ENCODE measurements at regions of chr1 and their contacts with region 1.

Region 1: DNA sequence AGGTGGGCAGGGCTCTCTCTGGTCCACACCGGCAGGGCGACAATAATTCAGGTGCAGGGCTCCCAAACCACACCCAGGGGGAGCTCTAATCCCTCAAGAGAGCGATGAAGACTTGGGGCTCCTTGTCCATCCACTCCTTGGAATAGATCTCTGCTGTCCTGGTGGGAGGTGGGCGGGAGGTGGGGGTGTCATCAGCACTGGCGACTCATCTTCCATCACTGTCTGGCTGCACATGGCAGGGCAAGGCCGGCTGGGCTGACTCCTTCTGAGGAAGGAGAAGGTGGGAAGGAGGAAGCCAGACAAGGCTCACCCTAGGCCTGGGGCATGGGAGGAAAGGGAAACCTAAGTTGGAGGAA is 29.3 kb downstream of the TNNT2 start:
- DNase-seq: peak; percentile 69 to 81 (median 73)
- ATAC-seq: peak; percentile 96
- H3K4me3 ChIP-seq: no peak overlapping the region
- H3K27ac ChIP-seq: no peak overlapping the region
- H3K4me1 ChIP-seq: no peaks in the 10 kb centered on the region
- H3K27me3 ChIP-seq: peaks cover 0 to 44% of the 10 kb centered on the region in 2 experiments; a peak in 2 of 5 replicates
- CTCF ChIP-seq: peak; percentile 81 to 87 (median 83)
- EP300 ChIP-seq: no peak
- POLR2A ChIP-seq: no peak
- RAD21 ChIP-seq: peak in 1 of 2 experiments; percentile 65; a peak in 3 of 4 replicates

Region 2: DNA sequence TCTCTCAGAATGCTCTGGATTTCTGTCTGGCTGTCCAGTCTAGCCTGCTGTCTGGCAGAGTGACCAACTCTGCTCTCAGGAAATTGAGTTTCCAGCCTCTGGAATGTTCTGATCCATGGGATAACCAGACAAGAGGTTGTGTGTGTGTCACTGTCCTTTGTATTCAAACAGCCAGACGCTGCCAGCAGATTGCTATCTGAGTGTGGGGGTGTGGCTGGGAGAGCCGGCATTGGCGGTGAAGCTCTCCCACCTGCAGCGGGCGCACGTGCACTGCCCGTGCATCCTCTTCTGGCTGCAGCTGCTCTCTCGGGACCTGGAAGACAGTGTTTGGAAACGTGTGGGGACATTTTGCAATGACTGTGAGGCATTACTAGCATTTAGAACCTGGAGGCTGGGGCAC is 38.8 kb before region 1 on chr1:
- CTCF ChIA-PET with region 1: interaction called, 3 read pairs
- POLR2A ChIA-PET with region 1: interaction called, 4 read pairs
- in situ Hi-C with region 1: no loop called
- intact Hi-C with region 1: loop called (anchors 1 kb)
- DNase-seq: peak; percentile 69 to 87 (median 80)
- ATAC-seq: peak; percentile 93
- H3K4me3 ChIP-seq: no peak overlapping the region
- H3K27ac ChIP-seq: no peak overlapping the region
- H3K4me1 ChIP-seq: peaks cover 0 to 6% of the 10 kb centered on the region in 2 experiments; a peak in 2 of 5 replicates
- H3K27me3 ChIP-seq: peaks cover 25 to 92% of the 10 kb centered on the region in 2 experiments; a peak in 4 of 5 replicates
- CTCF ChIP-seq: peak; percentile 65 to 79 (median 66)
- EP300 ChIP-seq: no peak
- POLR2A ChIP-seq: no peak
- RAD21 ChIP-seq: peak in 1 of 2 experiments; percentile 60; a peak in 2 of 4 replicates

Region 3: DNA sequence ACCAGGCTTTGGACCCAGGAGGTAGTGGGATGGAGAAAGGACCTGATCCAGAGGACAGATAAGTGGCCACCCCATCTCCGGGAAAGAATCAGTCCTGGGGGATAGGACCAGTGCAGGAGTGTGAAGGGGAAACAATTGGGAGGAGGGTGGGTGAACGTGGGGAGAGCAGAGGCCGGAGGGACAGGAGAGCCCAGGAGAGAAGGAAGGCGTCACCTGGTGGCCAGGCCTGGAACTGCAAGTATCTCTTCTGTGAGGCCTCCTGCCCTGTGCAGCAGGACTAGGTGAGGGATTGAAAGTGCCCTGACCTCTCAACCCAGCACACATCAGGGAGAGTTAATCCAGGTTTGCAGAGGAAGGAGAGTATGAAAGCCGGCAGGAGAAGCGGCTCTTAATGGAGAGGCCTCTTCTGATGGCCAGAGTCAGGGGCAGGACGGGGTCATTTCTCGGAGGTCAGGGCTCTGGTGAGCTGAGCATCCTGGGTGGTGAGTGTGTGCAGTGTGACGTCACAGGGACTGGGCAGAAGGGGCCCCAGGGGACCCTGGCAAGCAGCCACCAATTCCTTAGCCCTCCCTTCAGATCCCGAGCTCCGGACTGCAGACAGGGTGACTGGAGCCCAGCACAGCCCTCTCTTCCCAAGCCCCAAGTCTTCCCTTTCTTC is 60.1 kb after region 1 on chr1:
- CTCF ChIA-PET with region 1: interaction called, 4 read pairs
- POLR2A ChIA-PET with region 1: no interaction called
- in situ Hi-C with region 1: no loop called
- intact Hi-C with region 1: loop called (anchors 1 kb)
- DNase-seq: peak; percentile 86 to 92 (median 88)
- ATAC-seq: peak; percentile 97
- H3K4me3 ChIP-seq: no peak overlapping the region
- H3K27ac ChIP-seq: no peak overlapping the region
- H3K4me1 ChIP-seq: no peaks in the 10 kb centered on the region
- H3K27me3 ChIP-seq: peaks cover 33 to 69% of the 10 kb centered on the region in 2 experiments
- CTCF ChIP-seq: peak; percentile 88 to 98 (median 97)
- EP300 ChIP-seq: no peak
- POLR2A ChIP-seq: no peak
- RAD21 ChIP-seq: peak in 1 of 2 experiments; percentile 76; a peak in 2 of 4 replicates

Region 4: DNA sequence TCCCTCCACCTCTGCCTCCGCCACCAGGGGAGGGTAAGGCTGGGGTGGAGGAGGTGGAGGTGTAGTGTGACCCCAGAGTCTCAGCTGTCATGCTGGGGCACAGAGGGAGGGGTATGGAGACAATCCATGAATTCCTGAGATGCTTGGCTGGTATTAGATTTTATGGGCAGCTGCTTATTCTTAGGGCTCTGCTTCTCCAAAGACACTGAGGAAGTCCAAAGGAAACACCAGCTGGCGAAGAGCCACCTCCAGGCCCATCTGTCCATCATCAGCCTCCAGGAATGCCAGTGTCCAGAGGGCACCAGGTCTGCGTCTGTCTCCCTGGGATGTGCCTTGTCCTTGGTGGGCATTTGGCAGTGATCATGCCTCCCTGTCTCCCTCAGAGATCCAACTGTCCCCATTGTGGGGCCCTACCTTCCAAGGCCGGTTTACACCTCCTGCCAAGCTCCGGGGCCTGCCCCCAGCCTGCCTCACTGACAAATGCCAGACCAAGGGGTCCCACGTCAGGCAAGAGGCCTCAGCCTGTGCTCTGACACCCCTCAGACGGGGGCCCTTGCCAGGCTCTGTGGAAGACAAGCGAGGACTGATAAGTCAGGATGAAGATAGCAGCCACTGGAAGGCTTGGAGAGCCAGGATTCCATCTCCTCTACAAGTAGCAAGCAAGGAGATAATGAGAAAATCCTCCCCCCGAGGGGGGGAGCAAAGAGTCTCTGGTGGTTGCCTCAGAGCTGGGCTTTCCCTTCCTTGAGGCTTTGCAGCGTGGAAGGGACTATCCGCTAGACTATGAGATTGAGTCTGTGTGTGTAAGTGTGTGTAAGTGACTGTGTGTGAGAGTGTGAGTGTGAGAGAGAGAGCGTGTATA is 71.8 kb after region 1 on chr1:
- CTCF ChIA-PET with region 1: no interaction called
- POLR2A ChIA-PET with region 1: no interaction called
- in situ Hi-C with region 1: no loop called
- intact Hi-C with region 1: no loop called
- DNase-seq: no peak
- ATAC-seq: no peak
- H3K4me3 ChIP-seq: no peak overlapping the region
- H3K27ac ChIP-seq: no peak overlapping the region
- H3K4me1 ChIP-seq: no peaks in the 10 kb centered on the region
- H3K27me3 ChIP-seq: peaks cover 42 to 54% of the 10 kb centered on the region in 2 experiments; a peak in 4 of 5 replicates
- CTCF ChIP-seq: no peak
- EP300 ChIP-seq: no peak
- POLR2A ChIP-seq: no peak
- RAD21 ChIP-seq: no peak

Region 5: GRCh38 chr1:201468844-201469511 is 120.8 kb after region 1 on chr1 and contains the start of gene PHLDA3:
- CTCF ChIA-PET with region 1: no interaction called
- POLR2A ChIA-PET with region 1: no interaction called
- in situ Hi-C with region 1: no loop called
- intact Hi-C with region 1: no loop called
- DNase-seq: peak in 3 of 4 experiments; percentile 23 to 81 (median 77)
- ATAC-seq: peak; percentile 29
- H3K4me3 ChIP-seq: no peak within 1 kb of the TSS
- H3K27ac ChIP-seq: no peak within 1 kb of the TSS
- H3K4me1 ChIP-seq: peaks cover 0 to 17% of the 10 kb centered on the region in 2 experiments; a peak in 2 of 5 replicates
- H3K27me3 ChIP-seq: peaks cover 35 to 59% of the 10 kb centered on the region in 2 experiments
- CTCF ChIP-seq: no peak
- EP300 ChIP-seq: no peak
- POLR2A ChIP-seq: no peak
- RAD21 ChIP-seq: no peak
- polyA plus RNA-seq, gene PHLDA3: not detected